ENCODE measurements at regions of chr5 and their contacts with region 1.

Region 1: GRCh38 chr5:150350524-150351344 is 6.8 kb upstream of the TCOF1 start:
- DNase-seq: peak; percentile 54 to 71 (median 71)
- H3K4me3 ChIP-seq: peak overlapping the region in 1 of 7 experiments; percentile 32
- H3K27ac ChIP-seq: no peak overlapping the region
- H3K4me1 ChIP-seq: peaks cover 10 to 31% (median 21%) of the 10 kb centered on the region in 4 experiments
- H3K27me3 ChIP-seq: no peaks in the 10 kb centered on the region

Region 2: GRCh38 chr5:148653836-148654781 is 1696.6 kb before region 1 on chr5 and contains the start of gene HTR4:
- CTCF ChIA-PET with region 1: no interaction called
- POLR2A ChIA-PET with region 1: no interaction called
- DNase-seq: peak in 2 of 3 donors; percentile 51 to 58
- H3K4me3 ChIP-seq: peak within 1 kb of the TSS in 3 of 7 experiments; percentile 10 to 60 (median 46)
- H3K27ac ChIP-seq: no peak within 1 kb of the TSS
- H3K4me1 ChIP-seq: peaks cover 0 to 9% (median 3%) of the 10 kb centered on the region in 4 experiments
- H3K27me3 ChIP-seq: peaks cover 7 to 45% (median 33%) of the 10 kb centered on the region in 5 experiments

Region 3: GRCh38 chr5:149878039-149878747 is 472.5 kb before region 1 on chr5:
- CTCF ChIA-PET with region 1: no interaction called
- POLR2A ChIA-PET with region 1: no interaction called
- DNase-seq: no peak
- H3K4me3 ChIP-seq: no peak overlapping the region
- H3K27ac ChIP-seq: no peak overlapping the region
- H3K4me1 ChIP-seq: peaks cover 0 to 5% (median 2%) of the 10 kb centered on the region in 4 experiments
- H3K27me3 ChIP-seq: no peaks in the 10 kb centered on the region

Region 4: GRCh38 chr5:150129813-150130492 is 220.8 kb before region 1 on chr5:
- CTCF ChIA-PET with region 1: interaction called, 12 read pairs
- POLR2A ChIA-PET with region 1: no interaction called
- DNase-seq: peak; percentile 57 to 70 (median 59)
- H3K4me3 ChIP-seq: no peak overlapping the region
- H3K27ac ChIP-seq: no peak overlapping the region
- H3K4me1 ChIP-seq: peaks cover 0 to 19% (median 12%) of the 10 kb centered on the region in 4 experiments
- H3K27me3 ChIP-seq: no peaks in the 10 kb centered on the region

Region 5: DNA sequence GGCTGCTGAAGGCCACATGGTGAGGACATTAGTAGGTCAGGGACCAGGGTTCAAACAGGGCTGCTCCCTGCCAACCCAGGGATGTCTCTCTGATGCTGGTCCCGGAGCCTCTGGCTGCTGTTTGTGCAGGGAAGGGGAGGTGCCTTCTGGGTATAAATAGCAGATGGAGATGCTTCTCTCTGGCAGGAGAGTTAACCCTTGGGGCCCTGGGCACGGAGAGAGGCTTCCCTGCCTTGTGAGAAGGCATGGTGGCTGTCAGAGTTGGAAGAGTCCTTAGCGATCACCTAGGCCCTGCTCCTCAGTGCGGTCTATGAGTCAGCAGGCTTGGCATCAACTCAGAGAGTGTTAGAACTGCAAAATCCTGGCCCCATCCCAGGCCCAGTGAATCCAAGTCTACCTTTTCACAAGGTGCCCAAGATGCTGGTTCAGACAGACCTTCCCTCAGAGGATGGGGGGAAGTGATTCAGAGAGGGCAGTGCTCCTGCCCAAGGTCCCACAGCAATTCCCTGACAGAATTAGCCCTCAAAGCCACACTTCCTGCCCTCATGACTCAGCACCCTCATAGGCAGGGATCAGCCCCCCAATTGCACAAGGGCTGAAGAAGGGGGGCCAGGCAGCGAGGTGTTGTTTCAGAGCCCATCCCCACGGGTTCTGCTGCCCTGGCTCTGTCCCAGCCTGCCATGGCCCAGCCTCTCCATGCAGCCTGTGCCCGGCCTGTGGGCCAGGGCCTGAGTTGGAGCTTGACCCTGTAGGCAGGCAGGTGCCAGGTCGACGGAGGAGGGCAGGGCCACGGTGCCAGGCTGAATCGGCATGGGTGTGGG is 86.7 kb before region 1 on chr5:
- CTCF ChIA-PET with region 1: interaction called, 16 read pairs
- POLR2A ChIA-PET with region 1: no interaction called
- DNase-seq: peak; percentile 47 to 85 (median 81)
- H3K4me3 ChIP-seq: no peak overlapping the region
- H3K27ac ChIP-seq: no peak overlapping the region
- H3K4me1 ChIP-seq: peaks cover 0 to 20% (median 14%) of the 10 kb centered on the region in 4 experiments
- H3K27me3 ChIP-seq: no peaks in the 10 kb centered on the region

Region 6: GRCh38 chr5:150272526-150272925 is 78.2 kb before region 1 on chr5:
- CTCF ChIA-PET with region 1: interaction called, 63 read pairs
- POLR2A ChIA-PET with region 1: no interaction called
- DNase-seq: peak; percentile 40 to 61 (median 58)
- H3K4me3 ChIP-seq: no peak overlapping the region
- H3K27ac ChIP-seq: no peak overlapping the region
- H3K4me1 ChIP-seq: no peaks in the 10 kb centered on the region
- H3K27me3 ChIP-seq: peaks cover 0 to 2% (median 0%) of the 10 kb centered on the region in 5 experiments

Region 7: GRCh38 chr5:150339165-150339564 is 11.6 kb before region 1 on chr5:
- CTCF ChIA-PET with region 1: interaction called, 10 read pairs
- POLR2A ChIA-PET with region 1: interaction called, 3 read pairs
- DNase-seq: no peak
- H3K4me3 ChIP-seq: no peak overlapping the region
- H3K27ac ChIP-seq: no peak overlapping the region
- H3K4me1 ChIP-seq: no peaks in the 10 kb centered on the region
- H3K27me3 ChIP-seq: no peaks in the 10 kb centered on the region

Region 8: GRCh38 chr5:150361301-150361700 is 10.6 kb after region 1 on chr5:
- CTCF ChIA-PET with region 1: interaction called, 29 read pairs
- POLR2A ChIA-PET with region 1: no interaction called
- DNase-seq: no peak
- H3K4me3 ChIP-seq: no peak overlapping the region
- H3K27ac ChIP-seq: no peak overlapping the region
- H3K4me1 ChIP-seq: peaks cover 2 to 18% (median 13%) of the 10 kb centered on the region in 4 experiments
- H3K27me3 ChIP-seq: no peaks in the 10 kb centered on the region